Activated naive CD4-positive, alpha-beta T cell treated with anti-CD3 and anti-CD28 coated beads for 36 hours (primary cell): ENCODE measurements at regions of chr1 and their contacts with region 1.

Region 1: GRCh38 chr1:169563650-169564049 is 22.6 kb downstream of the F5 start:
- DNase-seq: no peak
- H3K4me3 Mint-ChIP-seq: no peak overlapping the region
- H3K27ac Mint-ChIP-seq: no peak overlapping the region
- H3K4me1 Mint-ChIP-seq: peaks cover 26% of the 10 kb centered on the region
- H3K27me3 Mint-ChIP-seq: no peaks in the 10 kb centered on the region

Region 2: DNA sequence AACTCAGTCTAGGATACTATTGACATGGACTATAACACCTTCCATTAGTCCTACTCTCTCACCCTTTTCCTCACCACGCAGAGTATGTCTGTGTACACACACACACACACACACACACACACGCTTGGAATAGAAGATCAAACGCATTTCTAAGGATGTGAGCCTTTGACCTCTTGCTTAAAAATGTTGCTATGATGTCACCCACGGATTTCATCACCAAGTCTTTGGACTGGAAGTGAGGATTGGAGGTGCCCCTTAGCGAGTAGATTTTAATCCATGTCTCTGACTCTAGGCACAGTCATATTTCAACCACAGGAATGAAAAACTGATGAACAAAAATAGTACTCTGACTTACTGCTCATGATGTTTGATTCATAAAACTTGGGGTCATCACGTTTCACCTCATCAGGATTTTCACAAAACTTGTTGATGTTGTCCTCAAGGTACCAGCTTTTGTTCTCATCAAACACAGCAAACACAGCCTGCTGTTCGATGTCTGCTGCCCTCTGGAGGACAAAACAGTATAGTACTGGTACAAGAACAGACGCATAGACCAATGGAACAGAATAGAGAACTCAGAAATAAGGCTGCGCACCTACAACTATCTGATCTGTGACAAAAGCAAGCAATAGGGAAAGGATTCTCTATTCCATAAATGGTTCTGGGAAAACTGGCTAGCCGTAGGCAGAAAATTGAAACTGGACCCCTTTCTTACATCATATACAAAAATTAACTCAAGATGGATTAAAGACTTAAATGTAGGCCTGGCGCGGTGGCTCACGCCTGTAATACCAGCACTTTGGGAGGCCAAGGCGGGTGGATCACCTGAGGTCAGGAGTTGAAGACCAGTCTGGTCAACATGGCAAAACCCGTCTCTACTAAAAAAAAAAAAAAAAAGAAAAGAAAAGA is 17.3 kb before region 1 on chr1:
- CTCF ChIA-PET with region 1: interaction called, 12 read pairs
- intact Hi-C with region 1: no loop called
- DNase-seq: peak; percentile 48
- H3K4me3 Mint-ChIP-seq: no peak overlapping the region
- H3K27ac Mint-ChIP-seq: no peak overlapping the region
- H3K4me1 Mint-ChIP-seq: no peaks in the 10 kb centered on the region
- H3K27me3 Mint-ChIP-seq: no peaks in the 10 kb centered on the region

Region 3: DNA sequence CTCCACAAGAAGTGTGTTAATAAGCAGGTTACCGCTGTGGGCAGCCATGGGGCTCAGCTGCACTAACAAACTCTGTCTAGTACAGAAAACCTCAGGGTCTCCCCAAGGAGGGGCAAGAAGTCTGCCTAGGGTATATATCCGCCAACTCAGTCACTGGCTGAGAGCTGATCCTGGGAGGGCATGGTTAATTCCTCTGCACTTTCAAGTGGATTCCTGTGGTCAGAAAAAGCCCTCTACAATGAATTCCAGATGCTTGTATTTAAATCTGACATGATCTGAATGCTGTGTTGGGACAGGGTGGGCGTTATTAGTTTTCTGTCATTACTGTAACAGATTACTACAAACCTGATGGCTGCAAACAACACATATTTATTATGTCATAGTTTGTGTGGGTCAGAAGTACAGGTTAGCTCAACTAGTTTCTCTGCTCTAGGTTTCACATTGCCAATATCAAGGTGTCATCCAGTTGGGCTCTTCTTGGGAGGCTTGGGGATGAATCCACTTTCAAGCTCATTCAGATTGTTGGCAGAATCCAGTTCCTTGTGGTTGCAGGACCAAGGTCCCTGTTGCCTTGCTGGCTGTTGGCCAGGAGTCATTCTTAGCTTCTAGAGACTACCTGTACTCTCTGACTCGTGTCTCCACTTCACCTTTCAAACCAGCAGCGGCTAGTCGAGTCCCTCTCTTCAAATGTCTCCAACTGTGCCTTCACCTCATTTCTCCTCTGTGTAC is 178.2 kb after region 1 on chr1:
- CTCF ChIA-PET with region 1: no interaction called
- intact Hi-C with region 1: no loop called
- DNase-seq: no peak
- H3K4me3 Mint-ChIP-seq: no peak overlapping the region
- H3K27ac Mint-ChIP-seq: no peak overlapping the region
- H3K4me1 Mint-ChIP-seq: no peaks in the 10 kb centered on the region
- H3K27me3 Mint-ChIP-seq: peaks cover 6% of the 10 kb centered on the region